ENCODE measurements at regions of chr12 and their contacts with region 1.

Region 1: GRCh38 chr12:14540801-14541462 is 26.8 kb downstream of the PLBD1 start:
- DNase-seq: no peak

Region 2: GRCh38 chr12:14113031-14113430 is 427.9 kb before region 1 on chr12:
- intact Hi-C with region 1: no loop called
- DNase-seq: no peak

Region 3: DNA sequence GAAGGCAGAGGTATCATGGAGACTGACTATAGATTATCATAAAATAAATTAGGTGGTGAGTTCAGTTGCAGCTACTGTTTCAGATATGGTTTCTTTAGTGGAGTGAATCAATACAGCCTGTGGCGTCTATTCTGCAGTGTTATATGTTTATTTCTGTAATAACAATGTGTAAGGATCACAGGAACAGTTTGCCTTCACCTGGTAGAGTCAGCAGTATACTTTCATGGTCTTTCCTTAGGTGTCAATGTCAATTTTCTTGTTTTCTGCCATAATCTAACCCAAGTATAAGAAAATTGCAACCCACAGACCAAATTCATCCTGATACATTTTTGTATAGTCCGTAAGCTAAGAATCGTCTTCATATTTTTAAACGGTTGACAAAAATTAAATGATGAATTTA is 315.9 kb before region 1 on chr12:
- intact Hi-C with region 1: loop called (anchors 10 kb)
- DNase-seq: no peak

Region 4: GRCh38 chr12:14591719-14592118 is 50.8 kb after region 1 on chr12:
- intact Hi-C with region 1: no loop called
- DNase-seq: no peak

Measured in posterior cingulate gyrus (tissue), 11 donors.